ENCODE measurements at regions of chr11 and their contacts with region 1.

Region 1: GRCh38 chr11:122273476-122274191 is 157.6 kb upstream of the BLID start:
- DNase-seq: no peak
- H3K4me3 ChIP-seq: no peak overlapping the region
- H3K27ac ChIP-seq: peak overlapping the region in 8 of 59 donors; percentile 7 to 55 (median 30)
- H3K27me3 ChIP-seq: no peaks in the 10 kb centered on the region
- CTCF ChIP-seq: no peak

Region 2: GRCh38 chr11:122229481-122230384 is 43.9 kb before region 1 on chr11:
- intact Hi-C with region 1: loop called in 1 of 2 experiments (anchors 2 kb)
- DNase-seq: peak; percentile 28 to 92 (median 78)
- H3K4me3 ChIP-seq: peak overlapping the region in 50 of 59 donors; percentile 5 to 50 (median 26)
- H3K27ac ChIP-seq: peak overlapping the region; percentile 24 to 93 (median 84)
- H3K27me3 ChIP-seq: no peaks in the 10 kb centered on the region
- CTCF ChIP-seq: no peak